Activated CD8-positive, alpha-beta T cell treated with anti-CD3 and anti-CD28 coated beads for 36 hours (primary cell): ENCODE measurements at regions of chr5 and their contacts with region 1.

Region 1: DNA sequence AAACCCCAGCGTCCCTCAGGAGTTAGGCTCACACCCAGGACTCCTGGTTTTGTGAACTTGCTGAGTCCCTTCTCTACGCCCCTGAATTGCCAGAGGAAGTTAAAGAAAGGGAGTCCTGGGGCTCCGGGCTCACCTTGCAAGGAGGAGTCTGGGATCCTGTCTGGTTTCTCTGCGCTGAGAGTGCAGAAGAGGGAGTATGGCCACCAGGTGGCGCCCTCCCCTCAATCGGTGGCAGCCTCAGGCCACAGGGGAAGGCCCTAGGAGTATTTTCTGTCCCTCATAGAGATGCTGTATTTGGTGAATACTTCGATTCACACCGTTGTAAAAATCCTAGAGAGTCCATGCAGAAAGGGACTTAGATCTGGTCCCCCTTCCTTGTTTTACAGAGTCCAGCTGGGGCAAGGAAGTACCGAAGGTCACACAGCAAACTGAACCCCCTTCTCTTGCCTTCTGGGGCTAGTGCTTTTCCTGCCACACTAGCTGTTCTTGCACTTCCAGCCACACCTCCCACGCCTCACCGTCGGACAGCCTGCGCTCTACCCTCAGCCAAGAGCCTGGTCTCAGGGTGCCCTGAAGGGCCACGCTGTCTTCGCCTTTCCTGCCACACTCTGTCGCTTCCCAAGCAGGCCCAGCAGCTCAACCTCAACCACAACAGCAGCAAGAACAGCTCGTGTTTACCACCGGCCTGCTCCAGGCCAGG is 10.2 kb downstream of the HAND1 start:
- DNase-seq: peak; percentile 87
- ATAC-seq: peak; percentile 95
- H3K4me3 Mint-ChIP-seq: no peak overlapping the region
- H3K27ac Mint-ChIP-seq: no peak overlapping the region
- H3K4me1 Mint-ChIP-seq: peaks cover 5% of the 10 kb centered on the region
- H3K27me3 Mint-ChIP-seq: peaks cover 35% of the 10 kb centered on the region
- CTCF ChIP-seq: peak; percentile 93

Region 2: GRCh38 chr5:154038707-154039457 is 428.9 kb before region 1 on chr5 and contains the starts of genes FAM114A2 and MFAP3:
- CTCF ChIA-PET with region 1: no interaction called
- POLR2A ChIA-PET with region 1: no interaction called
- intact Hi-C with region 1: no loop called
- DNase-seq: peak; percentile 93
- ATAC-seq: peak; percentile 99
- H3K4me3 Mint-ChIP-seq: peak within 1 kb of the TSS; percentile 98
- H3K27ac Mint-ChIP-seq: peak within 1 kb of the TSS; percentile 97
- H3K4me1 Mint-ChIP-seq: peaks cover 58% of the 10 kb centered on the region
- H3K27me3 Mint-ChIP-seq: no peaks in the 10 kb centered on the region
- CTCF ChIP-seq: no peak
- total RNA-seq, gene FAM114A2: 25.6 to 26.9 TPM
- total RNA-seq, gene MFAP3: 10.0 to 12.1 TPM

Region 3: GRCh38 chr5:154447089-154447725 is 20.6 kb before region 1 on chr5:
- CTCF ChIA-PET with region 1: interaction called, 27 read pairs
- POLR2A ChIA-PET with region 1: interaction called, 3 read pairs
- intact Hi-C with region 1: no loop called
- DNase-seq: no peak
- ATAC-seq: no peak
- H3K4me3 Mint-ChIP-seq: peak overlapping the region; percentile 85
- H3K27ac Mint-ChIP-seq: peak overlapping the region; percentile 48
- H3K4me1 Mint-ChIP-seq: peaks cover 41% of the 10 kb centered on the region
- H3K27me3 Mint-ChIP-seq: no peaks in the 10 kb centered on the region
- CTCF ChIP-seq: no peak

Region 4: DNA sequence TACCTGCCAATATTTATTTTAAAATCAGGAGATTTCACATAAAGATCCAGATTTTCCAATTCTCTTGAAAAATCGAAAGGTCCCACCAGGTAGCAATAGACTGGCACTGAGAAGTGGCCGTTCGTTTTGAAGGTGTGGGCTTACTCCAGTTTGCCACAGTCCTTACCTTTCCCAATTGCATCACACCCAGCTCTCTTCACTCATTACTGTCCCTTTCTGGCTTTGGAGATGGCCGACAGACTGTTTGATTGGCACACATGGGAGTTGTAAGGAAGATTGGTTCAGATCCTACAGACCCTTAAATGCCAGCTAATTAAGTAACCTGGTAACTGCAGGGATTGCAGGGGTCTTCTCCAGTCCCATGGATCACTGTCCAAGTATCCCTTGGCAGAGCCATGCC is 218.7 kb after region 1 on chr5:
- CTCF ChIA-PET with region 1: no interaction called
- POLR2A ChIA-PET with region 1: no interaction called
- intact Hi-C with region 1: no loop called
- DNase-seq: no peak
- ATAC-seq: no peak
- H3K4me3 Mint-ChIP-seq: no peak overlapping the region
- H3K27ac Mint-ChIP-seq: no peak overlapping the region
- H3K4me1 Mint-ChIP-seq: peaks cover 5% of the 10 kb centered on the region
- H3K27me3 Mint-ChIP-seq: peaks cover 14% of the 10 kb centered on the region
- CTCF ChIP-seq: no peak